ENCODE measurements at regions of chr7 and their contacts with region 1.

Region 1: DNA sequence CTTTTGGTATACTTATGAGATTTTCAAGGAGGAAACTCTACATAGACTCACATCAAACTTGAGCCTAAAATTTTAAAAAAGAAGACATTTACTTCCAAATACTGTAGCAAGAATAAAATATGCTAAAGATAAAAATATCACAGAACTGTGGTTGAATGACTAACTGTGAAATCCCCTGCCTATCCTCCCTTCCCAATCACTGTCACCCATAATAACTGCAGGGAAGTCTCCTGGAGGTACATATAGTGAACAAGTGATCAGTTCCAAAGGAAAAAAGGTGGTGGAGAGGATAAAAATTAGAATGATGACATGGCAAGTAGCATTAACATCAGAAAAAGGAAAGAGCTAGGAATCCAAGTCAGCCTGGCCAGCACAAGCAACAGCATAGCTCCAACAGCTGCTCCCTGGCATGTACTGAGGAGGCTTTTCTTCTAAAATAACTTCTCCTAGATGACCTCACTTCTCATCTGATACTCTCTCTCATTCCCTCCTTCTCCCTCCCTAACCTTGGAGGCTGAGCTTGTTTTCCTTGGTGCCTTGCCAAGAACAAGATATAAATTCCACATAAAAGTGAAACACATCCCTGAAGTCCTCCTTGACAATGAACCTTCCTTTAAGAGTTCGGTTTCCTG is 124.0 kb downstream of the IQUB start:
- DNase-seq: no peak
- H3K4me3 Mint-ChIP-seq: no peak overlapping the region
- H3K27ac Mint-ChIP-seq: no peak overlapping the region
- H3K4me1 Mint-ChIP-seq: no peaks in the 10 kb centered on the region
- H3K27me3 Mint-ChIP-seq: no peaks in the 10 kb centered on the region

Region 2: GRCh38 chr7:123455965-123456470 is 45.6 kb after region 1 on chr7:
- CTCF ChIA-PET with region 1: no interaction called
- intact Hi-C with region 1: loop called (anchors 2 kb)
- DNase-seq: no peak
- H3K4me3 Mint-ChIP-seq: no peak overlapping the region
- H3K27ac Mint-ChIP-seq: no peak overlapping the region
- H3K4me1 Mint-ChIP-seq: no peaks in the 10 kb centered on the region
- H3K27me3 Mint-ChIP-seq: no peaks in the 10 kb centered on the region

Region 3: DNA sequence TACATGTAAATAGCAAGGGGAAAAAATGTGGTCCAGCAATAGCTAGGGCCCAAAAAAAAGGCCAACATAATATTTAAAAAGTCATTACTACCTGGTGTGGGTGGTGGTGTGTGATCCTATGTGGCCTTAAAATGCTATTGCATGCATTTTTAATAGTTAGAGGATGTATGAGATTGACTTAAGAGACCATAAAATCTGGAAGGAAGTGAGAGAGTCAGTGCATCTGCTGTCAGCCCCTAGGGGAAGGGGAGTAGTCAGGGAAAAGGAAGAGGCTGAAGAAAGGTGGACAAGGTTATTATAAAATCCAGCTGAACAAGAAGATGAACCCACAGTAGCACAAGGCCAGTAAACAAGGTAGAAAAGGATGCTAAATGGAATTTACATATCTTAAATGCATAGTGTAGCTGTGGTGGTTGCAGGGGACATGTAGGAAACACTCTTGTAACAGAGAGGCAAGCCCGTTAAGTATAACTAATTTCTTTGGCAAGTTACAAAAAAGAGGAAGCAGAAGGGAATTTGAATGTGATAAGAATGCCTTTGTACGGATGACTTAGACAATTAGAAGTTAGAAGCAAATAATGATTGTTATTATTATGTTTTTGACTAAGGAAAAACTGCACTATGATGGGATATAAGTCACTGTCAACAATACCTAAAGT is 159.1 kb after region 1 on chr7:
- CTCF ChIA-PET with region 1: no interaction called
- intact Hi-C with region 1: no loop called
- DNase-seq: no peak
- H3K4me3 Mint-ChIP-seq: no peak overlapping the region
- H3K27ac Mint-ChIP-seq: no peak overlapping the region
- H3K4me1 Mint-ChIP-seq: no peaks in the 10 kb centered on the region
- H3K27me3 Mint-ChIP-seq: no peaks in the 10 kb centered on the region

Region 4: GRCh38 chr7:124072603-124073309 is 662.4 kb after region 1 on chr7:
- CTCF ChIA-PET with region 1: no interaction called
- intact Hi-C with region 1: no loop called
- DNase-seq: no peak
- H3K4me3 Mint-ChIP-seq: no peak overlapping the region
- H3K27ac Mint-ChIP-seq: no peak overlapping the region
- H3K4me1 Mint-ChIP-seq: no peaks in the 10 kb centered on the region
- H3K27me3 Mint-ChIP-seq: no peaks in the 10 kb centered on the region